ENCODE measurements at regions of chr12 and their contacts with region 1.

Region 1: DNA sequence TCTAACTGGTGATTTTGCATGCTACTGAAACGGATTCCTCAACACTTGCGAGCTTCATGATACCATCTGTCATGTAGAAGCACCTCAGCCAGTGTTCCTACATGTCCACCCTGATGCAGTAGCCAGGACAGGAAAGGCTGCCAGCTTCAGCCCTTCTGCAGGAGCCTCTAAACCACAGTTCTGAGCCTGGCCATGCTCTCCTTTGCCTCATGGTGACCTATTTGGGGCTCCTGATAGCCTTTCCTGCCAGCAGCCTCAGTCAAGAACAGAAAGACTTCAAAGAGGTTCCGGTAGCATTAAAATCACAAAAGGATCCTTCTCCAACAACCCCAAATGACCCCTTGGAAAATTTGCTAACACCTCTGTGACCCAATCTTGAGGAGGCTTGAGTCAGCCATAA is 96.0 kb downstream of the CNTN1 start:
- DNase-seq: no peak
- ATAC-seq: no peak
- H3K4me3 ChIP-seq: no peak overlapping the region
- H3K27ac ChIP-seq: no peak overlapping the region
- H3K4me1 ChIP-seq: no peaks in the 10 kb centered on the region
- H3K27me3 ChIP-seq: no peaks in the 10 kb centered on the region
- CTCF ChIP-seq: no peak
- EP300 ChIP-seq: no peak
- POLR2A ChIP-seq: no peak
- RAD21 ChIP-seq: no peak

Region 2: DNA sequence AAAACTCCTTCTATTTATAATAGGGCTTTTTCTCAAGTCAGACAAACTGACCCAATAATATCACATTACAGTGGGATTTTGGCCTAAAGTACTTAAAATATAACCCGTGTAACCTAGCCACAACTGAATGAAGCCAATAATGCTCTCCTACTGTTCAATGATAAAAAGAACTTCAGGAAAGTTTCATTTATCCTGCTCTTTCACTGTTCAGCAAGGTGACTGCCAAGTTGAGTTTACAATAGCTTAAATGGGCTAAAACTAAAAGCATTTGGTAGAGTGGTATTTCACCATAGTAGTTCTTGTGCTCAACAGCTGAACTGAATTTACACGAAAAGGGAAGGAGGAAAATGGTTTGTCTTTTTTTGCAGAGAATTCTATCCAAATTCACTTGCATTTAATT is 46.2 kb before region 1 on chr12:
- CTCF ChIA-PET with region 1: no interaction called
- POLR2A ChIA-PET with region 1: no interaction called
- RAD21 ChIA-PET with region 1: no interaction called
- SMC1A ChIA-PET with region 1: no interaction called
- in situ Hi-C with region 1: no loop called
- intact Hi-C with region 1: loop called (anchors 1 kb)
- DNase-seq: no peak
- ATAC-seq: no peak
- H3K4me3 ChIP-seq: no peak overlapping the region
- H3K27ac ChIP-seq: no peak overlapping the region
- H3K4me1 ChIP-seq: no peaks in the 10 kb centered on the region
- H3K27me3 ChIP-seq: no peaks in the 10 kb centered on the region
- CTCF ChIP-seq: no peak
- EP300 ChIP-seq: no peak
- POLR2A ChIP-seq: no peak
- RAD21 ChIP-seq: no peak

Region 3: GRCh38 chr12:40802656-40803055 is 14.4 kb after region 1 on chr12:
- CTCF ChIA-PET with region 1: no interaction called
- POLR2A ChIA-PET with region 1: no interaction called
- RAD21 ChIA-PET with region 1: no interaction called
- SMC1A ChIA-PET with region 1: no interaction called
- in situ Hi-C with region 1: no loop called
- intact Hi-C with region 1: no loop called
- DNase-seq: no peak
- ATAC-seq: no peak
- H3K4me3 ChIP-seq: no peak overlapping the region
- H3K27ac ChIP-seq: no peak overlapping the region
- H3K4me1 ChIP-seq: no peaks in the 10 kb centered on the region
- H3K27me3 ChIP-seq: no peaks in the 10 kb centered on the region
- CTCF ChIP-seq: no peak
- EP300 ChIP-seq: no peak
- POLR2A ChIP-seq: no peak
- RAD21 ChIP-seq: no peak

Measured in GM12878 (cell line).